Activated B cell treated with CpG ODN at 0.5 μM for 24 hours (primary cell): ENCODE measurements at regions of chr13 and their contacts with region 1.

Region 1: GRCh38 chr13:21638319-21639282 is 32.3 kb upstream of the FGF9 start:
- DNase-seq: no peak
- ATAC-seq: no peak
- H3K4me3 Mint-ChIP-seq: no peak overlapping the region
- H3K27ac Mint-ChIP-seq: no peak overlapping the region
- H3K4me1 Mint-ChIP-seq: no peaks in the 10 kb centered on the region
- H3K27me3 Mint-ChIP-seq: peaks cover 12% of the 10 kb centered on the region
- CTCF ChIP-seq: peak; percentile 40

Region 2: GRCh38 chr13:21034603-21035191 is 603.9 kb before region 1 on chr13:
- CTCF ChIA-PET with region 1: no interaction called
- POLR2A ChIA-PET with region 1: no interaction called
- intact Hi-C with region 1: no loop called
- DNase-seq: no peak
- ATAC-seq: no peak
- H3K4me3 Mint-ChIP-seq: no peak overlapping the region
- H3K27ac Mint-ChIP-seq: no peak overlapping the region
- H3K4me1 Mint-ChIP-seq: peaks cover 10% of the 10 kb centered on the region
- H3K27me3 Mint-ChIP-seq: no peaks in the 10 kb centered on the region
- CTCF ChIP-seq: no peak

Region 3: DNA sequence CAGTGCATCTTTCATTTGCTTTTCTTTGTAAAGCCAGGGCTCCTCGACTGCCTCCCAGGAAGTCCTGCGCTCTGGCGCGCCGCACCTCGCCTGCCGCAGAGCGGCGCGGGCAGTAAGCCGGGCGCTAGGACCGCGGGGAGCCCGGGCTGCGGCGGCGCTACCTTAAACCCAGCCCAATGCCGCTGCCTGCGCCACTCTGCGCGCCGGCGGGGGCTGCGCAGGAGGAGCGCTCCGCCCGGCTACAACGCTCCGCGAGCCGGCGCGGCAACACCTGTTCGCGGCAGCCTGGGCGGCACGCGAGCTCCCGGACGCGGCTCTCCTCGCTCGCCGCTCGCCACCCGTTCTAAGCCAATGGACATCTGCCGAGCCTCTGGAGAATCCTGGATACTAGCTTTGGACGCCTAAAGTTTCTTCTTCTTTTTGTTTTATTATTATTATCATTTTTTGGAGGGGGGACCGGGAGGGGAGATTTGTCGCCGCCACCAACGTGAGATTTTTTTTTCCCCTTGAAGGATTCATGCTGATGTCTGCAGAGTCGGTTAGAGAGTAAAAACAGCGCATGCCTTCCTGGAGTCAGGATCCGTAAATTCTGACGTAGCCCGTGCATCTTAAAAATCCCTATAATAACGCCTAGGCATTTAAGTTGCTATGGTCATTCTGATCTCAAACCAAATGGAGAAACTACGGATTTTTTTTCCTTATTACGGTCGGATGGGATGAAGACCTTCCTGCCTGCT is 32.5 kb after region 1 on chr13 and contains the start of gene FGF9:
- CTCF ChIA-PET with region 1: interaction called, 19 read pairs
- POLR2A ChIA-PET with region 1: interaction called, 5 read pairs
- intact Hi-C with region 1: loop called (anchors 1 kb)
- DNase-seq: peak; percentile 76
- ATAC-seq: peak; percentile 77
- H3K4me3 Mint-ChIP-seq: peak within 1 kb of the TSS; percentile 85
- H3K27ac Mint-ChIP-seq: peak within 1 kb of the TSS; percentile 61
- H3K4me1 Mint-ChIP-seq: peaks cover 48% of the 10 kb centered on the region
- H3K27me3 Mint-ChIP-seq: peaks cover 43% of the 10 kb centered on the region
- CTCF ChIP-seq: no peak
- total RNA-seq, gene FGF9: 0.22 and 0.49 TPM in 2 replicates

Region 4: GRCh38 chr13:21849323-21849722 is 210.7 kb after region 1 on chr13:
- CTCF ChIA-PET with region 1: interaction called, 11 read pairs
- POLR2A ChIA-PET with region 1: no interaction called
- intact Hi-C with region 1: loop called (anchors 1 kb)
- DNase-seq: no peak
- ATAC-seq: peak; percentile 66
- H3K4me3 Mint-ChIP-seq: no peak overlapping the region
- H3K27ac Mint-ChIP-seq: no peak overlapping the region
- H3K4me1 Mint-ChIP-seq: no peaks in the 10 kb centered on the region
- H3K27me3 Mint-ChIP-seq: no peaks in the 10 kb centered on the region
- CTCF ChIP-seq: no peak

Region 5: GRCh38 chr13:22740264-22740663 is 1101.7 kb after region 1 on chr13:
- CTCF ChIA-PET with region 1: no interaction called
- POLR2A ChIA-PET with region 1: no interaction called
- intact Hi-C with region 1: loop called (anchors 1 kb)
- DNase-seq: no peak
- ATAC-seq: no peak
- H3K4me3 Mint-ChIP-seq: no peak overlapping the region
- H3K27ac Mint-ChIP-seq: no peak overlapping the region
- H3K4me1 Mint-ChIP-seq: no peaks in the 10 kb centered on the region
- H3K27me3 Mint-ChIP-seq: no peaks in the 10 kb centered on the region
- CTCF ChIP-seq: no peak

Region 6: GRCh38 chr13:22765547-22765946 is 1126.9 kb after region 1 on chr13:
- CTCF ChIA-PET with region 1: no interaction called
- POLR2A ChIA-PET with region 1: no interaction called
- intact Hi-C with region 1: no loop called
- DNase-seq: no peak
- ATAC-seq: no peak
- H3K4me3 Mint-ChIP-seq: no peak overlapping the region
- H3K27ac Mint-ChIP-seq: no peak overlapping the region
- H3K4me1 Mint-ChIP-seq: no peaks in the 10 kb centered on the region
- H3K27me3 Mint-ChIP-seq: no peaks in the 10 kb centered on the region
- CTCF ChIP-seq: no peak

Region 7: GRCh38 chr13:22801402-22802003 is 1162.9 kb after region 1 on chr13:
- CTCF ChIA-PET with region 1: interaction called, 3 read pairs
- POLR2A ChIA-PET with region 1: no interaction called
- intact Hi-C with region 1: loop called (anchors 1 kb)
- DNase-seq: no peak
- ATAC-seq: no peak
- H3K4me3 Mint-ChIP-seq: no peak overlapping the region
- H3K27ac Mint-ChIP-seq: no peak overlapping the region
- H3K4me1 Mint-ChIP-seq: no peaks in the 10 kb centered on the region
- H3K27me3 Mint-ChIP-seq: no peaks in the 10 kb centered on the region
- CTCF ChIP-seq: no peak